ENCODE measurements at regions of chr12 and their contacts with region 1.

Region 1: GRCh38 chr12:79737875-79738718 is 47.3 kb upstream of the PAWR start:
- DNase-seq: peak; percentile 22 to 63
- H3K4me3 ChIP-seq: no peak overlapping the region
- H3K27ac ChIP-seq: no peak overlapping the region
- H3K4me1 ChIP-seq: peaks cover 12% of the 10 kb centered on the region; the same call in 1 of the 2 replicates
- H3K27me3 ChIP-seq: no peaks in the 10 kb centered on the region
- CTCF ChIP-seq: peak; percentile 81

Region 2: GRCh38 chr12:79555028-79555930 is 182.8 kb before region 1 on chr12:
- CTCF ChIA-PET with region 1: no interaction called
- POLR2A ChIA-PET with region 1: no interaction called
- intact Hi-C with region 1: loop called (anchors 2 kb)
- DNase-seq: peak in 1 of 2 experiments; percentile 39
- H3K4me3 ChIP-seq: no peak overlapping the region
- H3K27ac ChIP-seq: 0 out of 2 replicates have a peak overlapping the region, but pooled peaks have one; percentile 31
- H3K4me1 ChIP-seq: peaks cover 12% of the 10 kb centered on the region
- H3K27me3 ChIP-seq: no peaks in the 10 kb centered on the region
- CTCF ChIP-seq: peak; percentile 69

Region 3: GRCh38 chr12:79690638-79691493 is 47.2 kb before region 1 on chr12 and contains the start of gene PAWR:
- CTCF ChIA-PET with region 1: no interaction called
- POLR2A ChIA-PET with region 1: interaction called, 3 read pairs
- intact Hi-C with region 1: loop called (anchors 2 kb)
- DNase-seq: peak; percentile 71 to 89
- H3K4me3 ChIP-seq: peak within 1 kb of the TSS; percentile 82
- H3K27ac ChIP-seq: peak within 1 kb of the TSS; percentile 99
- H3K4me1 ChIP-seq: peaks cover 38% of the 10 kb centered on the region
- H3K27me3 ChIP-seq: no peaks in the 10 kb centered on the region
- CTCF ChIP-seq: no peak; the same call in 1 of the 2 replicates
- total RNA-seq, gene PAWR: 204 and 361 TPM in 2 replicates

Region 4: GRCh38 chr12:80412369-80412953 is 674.4 kb after region 1 on chr12:
- CTCF ChIA-PET with region 1: no interaction called
- POLR2A ChIA-PET with region 1: no interaction called
- intact Hi-C with region 1: no loop called
- DNase-seq: no peak
- H3K4me3 ChIP-seq: no peak overlapping the region
- H3K27ac ChIP-seq: no peak overlapping the region
- H3K4me1 ChIP-seq: no peaks in the 10 kb centered on the region
- H3K27me3 ChIP-seq: no peaks in the 10 kb centered on the region
- CTCF ChIP-seq: peak; percentile 88